Testis (tissue), 5 donors: ENCODE measurements at regions of chr3 and their contacts with region 1.

Region 1: GRCh38 chr3:134794950-134795745 is at the start of gene EPHB1:
- DNase-seq: peak; percentile 96
- H3K4me3 ChIP-seq: peak within 1 kb of the TSS; percentile 54 to 66
- H3K27ac ChIP-seq: peak within 1 kb of the TSS; percentile 0 to 56
- H3K4me1 ChIP-seq: peaks cover 21% of the 10 kb centered on the region
- H3K27me3 ChIP-seq: no peaks in the 10 kb centered on the region
- CTCF ChIP-seq: peak; percentile 92 to 93 (median 93)
- POLR2A ChIP-seq: no peak
- total RNA-seq, gene EPHB1: 31.3 to 37.1 TPM

Region 2: DNA sequence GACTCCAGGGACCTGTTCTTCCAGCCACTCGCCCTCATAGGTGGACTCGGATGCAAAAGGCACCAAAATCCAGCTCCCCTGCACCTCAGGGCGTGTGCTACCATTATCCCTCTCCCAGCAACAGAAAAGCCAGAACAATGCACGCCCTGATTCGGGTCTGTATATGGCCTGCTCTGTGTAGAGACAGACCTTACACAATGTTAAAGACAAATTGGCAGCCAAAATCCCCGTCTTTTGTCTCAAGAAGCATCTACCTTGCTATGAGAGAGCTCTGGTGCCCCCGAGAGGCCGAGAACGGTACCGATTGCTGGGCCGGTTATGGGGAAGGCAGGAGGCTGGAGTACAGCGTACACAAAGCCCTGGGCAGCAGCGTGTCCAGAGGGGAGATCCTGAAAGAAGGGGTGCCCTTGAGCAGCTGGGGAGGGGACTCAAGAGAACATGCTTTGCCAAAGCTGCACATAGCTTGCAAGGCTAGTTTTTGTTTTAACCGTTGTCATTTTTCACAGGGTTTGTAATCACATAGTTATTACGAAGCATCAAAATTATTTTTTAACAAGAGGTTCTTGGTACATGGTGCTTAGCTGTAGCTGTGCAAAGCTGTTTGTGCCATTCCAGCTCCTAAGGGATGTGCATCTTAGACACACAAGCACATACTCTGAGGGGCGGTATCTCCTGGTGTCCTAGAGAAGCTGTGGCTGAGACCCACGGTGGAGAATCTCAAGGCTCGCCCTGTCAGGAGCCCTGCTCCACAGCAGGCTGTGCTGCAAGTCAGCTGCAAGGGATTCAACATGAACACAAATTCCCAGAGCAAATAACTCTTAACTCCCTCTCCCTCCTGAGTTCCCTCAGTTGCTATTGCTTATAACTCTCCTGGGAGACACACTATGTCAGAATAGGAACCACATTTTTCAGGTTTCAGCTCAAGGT is 708.9 kb after region 1 on chr3:
- intact Hi-C with region 1: loop called (anchors 10 kb)
- DNase-seq: peak; percentile 90
- H3K4me3 ChIP-seq: no peak overlapping the region
- H3K27ac ChIP-seq: no peak overlapping the region
- H3K4me1 ChIP-seq: peaks cover 5% of the 10 kb centered on the region
- H3K27me3 ChIP-seq: no peaks in the 10 kb centered on the region
- CTCF ChIP-seq: peak; percentile 29 to 53 (median 33)
- POLR2A ChIP-seq: no peak

Region 3: DNA sequence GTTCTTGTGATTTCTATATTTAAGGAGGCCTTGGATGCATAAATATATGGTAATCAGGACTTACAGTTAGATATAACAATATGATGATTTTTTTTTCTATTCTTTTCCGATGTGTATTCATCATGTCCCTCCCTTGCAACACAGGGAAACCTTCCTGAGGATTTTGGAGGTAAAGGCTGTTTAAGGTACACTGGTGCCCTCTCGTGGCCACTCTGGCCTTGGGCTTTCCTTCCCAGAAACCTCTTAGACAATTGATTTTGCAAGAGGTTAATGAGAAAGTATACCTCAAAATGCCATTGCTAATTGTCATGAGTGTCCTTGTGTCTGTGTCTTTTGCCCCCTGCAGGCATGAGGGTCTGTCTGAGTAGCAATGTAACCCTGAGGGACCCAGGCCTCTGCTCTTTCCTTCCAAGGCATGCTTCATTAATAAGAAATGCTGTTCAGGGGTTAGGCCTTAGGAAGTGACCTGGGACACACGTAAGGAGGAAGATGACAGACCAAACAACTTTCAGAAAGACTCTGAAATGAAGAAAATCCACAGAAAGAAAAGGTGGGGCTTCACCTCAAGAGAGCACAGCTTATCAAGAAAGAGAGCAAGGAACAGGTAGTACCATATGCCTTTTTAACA is 1100.1 kb after region 1 on chr3:
- intact Hi-C with region 1: loop called (anchors 10 kb)
- DNase-seq: peak; percentile 87
- H3K4me3 ChIP-seq: no peak overlapping the region
- H3K27ac ChIP-seq: no peak overlapping the region
- H3K4me1 ChIP-seq: no peaks in the 10 kb centered on the region
- H3K27me3 ChIP-seq: no peaks in the 10 kb centered on the region
- CTCF ChIP-seq: peak; percentile 56 to 71 (median 67)
- POLR2A ChIP-seq: no peak